H1 (cell line): ENCODE measurements at regions of chr9 and their contacts with region 1.

Region 1: DNA sequence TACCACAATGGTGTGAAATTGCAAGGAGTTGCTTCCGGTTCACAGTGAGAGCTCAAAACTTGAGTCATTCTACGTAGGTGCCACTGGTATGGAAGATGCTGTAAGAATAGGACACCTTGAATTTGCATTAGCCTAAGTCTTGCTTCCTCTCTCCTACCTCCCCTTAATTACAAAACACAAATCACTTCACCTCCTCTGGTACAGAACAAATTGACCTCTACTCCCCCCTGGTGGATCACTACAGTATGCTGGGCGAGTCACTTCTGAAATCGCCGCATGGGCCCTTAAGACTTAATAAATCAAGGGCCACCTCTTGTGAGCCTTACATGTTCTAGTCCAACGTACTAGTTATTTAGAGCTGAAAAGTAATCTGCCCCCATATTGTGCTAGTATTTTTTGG is 145.3 kb upstream of the SMARCA2 start:
- DNase-seq: peak; percentile 49 to 64
- H3K4me3 ChIP-seq: no peak overlapping the region
- H3K27ac ChIP-seq: no peak overlapping the region
- H3K4me1 ChIP-seq: peaks cover 0 to 13% (median 3%) of the 10 kb centered on the region in 4 experiments; a peak in 4 of 7 replicates
- H3K27me3 ChIP-seq: no peaks in the 10 kb centered on the region
- CTCF ChIP-seq: peak; percentile 42 to 82 (median 74)
- EP300 ChIP-seq: no peak
- POLR2A ChIP-seq: no peak
- RAD21 ChIP-seq: peak; percentile 86 to 90

Region 2: GRCh38 chr9:1726993-1727759 is 142.7 kb before region 1 on chr9:
- CTCF ChIA-PET with region 1: interaction called, 22 read pairs
- POLR2A ChIA-PET with region 1: no interaction called
- DNase-seq: no peak
- H3K4me3 ChIP-seq: no peak overlapping the region
- H3K27ac ChIP-seq: no peak overlapping the region
- H3K4me1 ChIP-seq: peaks cover 0 to 6% (median 2%) of the 10 kb centered on the region in 4 experiments; a peak in 3 of 7 replicates
- H3K27me3 ChIP-seq: no peaks in the 10 kb centered on the region
- CTCF ChIP-seq: peak in 2 of 3 experiments; percentile 52 to 60; a peak in 3 of 4 replicates
- EP300 ChIP-seq: no peak
- POLR2A ChIP-seq: no peak
- RAD21 ChIP-seq: peak; percentile 73 to 77

Region 3: DNA sequence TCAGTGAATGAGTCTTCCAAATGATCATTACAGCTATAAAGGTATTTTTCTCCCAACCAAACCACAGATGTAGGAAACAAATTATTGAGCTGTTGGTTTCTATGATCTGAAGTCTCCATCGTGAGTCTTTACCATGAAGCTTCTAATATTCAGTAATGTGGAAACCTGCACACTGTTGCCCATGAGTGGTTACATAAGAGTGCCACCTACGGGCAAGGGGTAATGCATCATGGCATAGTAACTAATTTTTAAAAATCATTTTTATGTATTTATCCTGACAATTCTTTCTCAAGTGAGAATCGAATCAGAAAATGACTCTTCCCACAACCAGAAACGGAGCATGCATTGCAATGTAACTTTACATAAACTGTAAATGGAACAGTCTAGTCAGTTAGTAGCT is 137.2 kb before region 1 on chr9:
- CTCF ChIA-PET with region 1: interaction called, 22 read pairs
- POLR2A ChIA-PET with region 1: no interaction called
- DNase-seq: no peak
- H3K4me3 ChIP-seq: no peak overlapping the region
- H3K27ac ChIP-seq: no peak overlapping the region
- H3K4me1 ChIP-seq: no peaks in the 10 kb centered on the region
- H3K27me3 ChIP-seq: peaks cover 0 to 1% (median under 1%) of the 10 kb centered on the region in 4 experiments; a peak in 3 of 7 replicates
- CTCF ChIP-seq: peak in 2 of 3 experiments; percentile 31 to 44; a peak in 2 of 4 replicates
- EP300 ChIP-seq: no peak
- POLR2A ChIP-seq: no peak
- RAD21 ChIP-seq: peak; percentile 35 to 56

Region 4: GRCh38 chr9:1857808-1858207 is 12.0 kb before region 1 on chr9:
- CTCF ChIA-PET with region 1: interaction called, 26 read pairs
- POLR2A ChIA-PET with region 1: no interaction called
- DNase-seq: no peak
- H3K4me3 ChIP-seq: no peak overlapping the region
- H3K27ac ChIP-seq: no peak overlapping the region
- H3K4me1 ChIP-seq: no peaks in the 10 kb centered on the region; a peak in 1 of 7 replicates
- H3K27me3 ChIP-seq: no peaks in the 10 kb centered on the region; a peak in 1 of 7 replicates
- CTCF ChIP-seq: no peak
- EP300 ChIP-seq: no peak
- POLR2A ChIP-seq: no peak
- RAD21 ChIP-seq: no peak

Region 5: GRCh38 chr9:1916655-1917054 is 46.8 kb after region 1 on chr9:
- CTCF ChIA-PET with region 1: interaction called, 14 read pairs
- POLR2A ChIA-PET with region 1: interaction called, 4 read pairs
- DNase-seq: no peak
- H3K4me3 ChIP-seq: no peak overlapping the region
- H3K27ac ChIP-seq: no peak overlapping the region
- H3K4me1 ChIP-seq: peaks cover 2 to 7% (median 3%) of the 10 kb centered on the region in 4 experiments; a peak in 4 of 7 replicates
- H3K27me3 ChIP-seq: no peaks in the 10 kb centered on the region
- CTCF ChIP-seq: no peak
- EP300 ChIP-seq: no peak
- POLR2A ChIP-seq: no peak
- RAD21 ChIP-seq: no peak